GM10248 (cell line): ENCODE measurements at regions of chr16 and their contacts with region 1.

Region 1: GRCh38 chr16:31440516-31441184 is 1.9 kb downstream of the ZNF843 start:
- DNase-seq: no peak
- CTCF ChIP-seq: no peak

Region 2: DNA sequence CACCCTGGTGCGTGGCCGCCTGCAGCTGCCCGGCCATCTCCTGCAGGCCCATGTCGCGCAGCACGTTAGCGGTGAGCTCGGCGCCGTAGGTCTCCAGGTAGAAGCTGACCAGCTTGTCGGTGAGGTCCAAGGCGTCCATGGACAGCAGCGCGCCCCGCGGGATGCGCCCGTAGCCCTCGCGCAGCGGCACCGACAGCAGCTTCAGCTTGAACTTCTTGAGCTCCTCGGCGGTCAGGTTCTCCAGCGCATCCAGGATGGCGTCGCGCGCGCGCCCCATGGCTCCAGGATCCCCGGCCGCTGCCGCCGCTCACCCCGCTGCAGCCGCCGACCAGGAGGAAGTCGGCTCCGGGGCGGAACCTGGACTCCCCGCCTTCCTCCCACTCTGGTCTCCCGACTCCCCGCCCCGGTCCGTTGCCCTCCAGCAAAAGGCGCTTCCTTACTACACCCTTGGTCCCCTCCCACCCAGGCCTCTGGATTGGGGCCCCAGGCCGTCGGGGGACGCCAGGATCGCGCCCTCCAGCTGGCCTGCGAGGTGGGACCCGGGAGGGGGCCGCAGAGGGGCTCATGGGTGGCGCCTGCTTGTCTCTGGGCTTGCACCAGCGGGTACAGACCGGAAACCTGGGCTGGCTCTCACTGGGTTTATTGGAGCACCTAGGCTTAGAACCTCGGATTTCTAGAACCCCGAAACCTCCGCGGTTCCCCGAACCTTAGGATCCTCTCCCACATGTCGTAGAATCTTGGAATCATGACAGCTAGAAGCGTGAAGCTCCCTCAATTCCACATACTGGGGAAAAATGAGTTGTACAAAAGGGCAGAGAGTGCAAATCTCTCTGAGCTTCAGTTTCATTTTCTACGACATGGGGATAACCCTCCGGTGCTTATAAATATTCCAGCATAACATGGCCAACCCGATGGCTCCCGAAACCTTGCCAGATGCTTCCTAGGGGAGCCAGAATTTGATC is 238.0 kb before region 1 on chr16 and contains the start of gene PYCARD:
- CTCF ChIA-PET with region 1: interaction called, 13 read pairs
- POLR2A ChIA-PET with region 1: interaction called, 3 read pairs
- DNase-seq: peak; percentile 76
- CTCF ChIP-seq: no peak

Region 3: GRCh38 chr16:31427441-31428278 is 13.0 kb before region 1 on chr16:
- CTCF ChIA-PET with region 1: interaction called, 44 read pairs
- POLR2A ChIA-PET with region 1: interaction called, 3 read pairs
- DNase-seq: peak; percentile 61
- CTCF ChIP-seq: no peak

Region 4: DNA sequence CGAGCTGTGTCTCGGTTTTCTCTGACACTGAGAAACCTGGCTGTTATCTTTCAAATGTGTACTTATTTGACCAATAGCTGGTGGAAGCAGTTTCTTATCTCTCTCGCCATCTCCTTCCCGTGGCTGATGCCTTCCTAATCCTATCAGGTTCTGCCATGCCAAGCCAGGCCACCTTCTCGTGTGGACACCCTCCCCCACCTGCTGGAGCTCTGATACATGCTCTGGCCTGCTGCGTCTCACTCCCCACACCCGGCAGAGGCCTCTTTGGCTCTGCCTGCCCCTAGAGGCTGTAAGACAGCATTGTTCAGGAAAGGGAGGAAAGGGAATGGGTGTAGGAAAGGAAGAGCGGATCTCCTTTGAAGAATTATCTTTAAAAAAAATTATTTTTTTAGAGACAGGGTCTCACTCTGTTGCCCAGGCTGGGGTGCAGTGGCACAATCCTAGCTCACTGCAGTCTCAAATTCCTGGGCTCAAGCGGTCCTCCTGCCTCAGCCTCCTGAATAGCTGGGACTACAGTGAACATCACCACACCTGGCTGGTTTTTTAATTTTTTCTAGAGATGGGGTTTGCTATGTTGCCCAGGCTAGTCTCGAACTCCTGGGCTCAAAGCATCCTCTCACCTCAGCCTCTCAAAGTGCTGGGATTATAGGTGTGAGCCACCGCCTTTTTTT is 11.2 kb after region 1 on chr16:
- CTCF ChIA-PET with region 1: interaction called, 105 read pairs
- POLR2A ChIA-PET with region 1: interaction called, 3 read pairs
- DNase-seq: no peak
- CTCF ChIP-seq: peak; percentile 13